ENCODE measurements at regions of chr14 and their contacts with region 1.

Region 1: GRCh38 chr14:99946652-99947489 is 118.4 kb upstream of the EVL start:
- DNase-seq: no peak
- H3K4me3 ChIP-seq: no peak overlapping the region; the same call in 1 of the 2 replicates
- CTCF ChIP-seq: peak; percentile 89

Region 2: DNA sequence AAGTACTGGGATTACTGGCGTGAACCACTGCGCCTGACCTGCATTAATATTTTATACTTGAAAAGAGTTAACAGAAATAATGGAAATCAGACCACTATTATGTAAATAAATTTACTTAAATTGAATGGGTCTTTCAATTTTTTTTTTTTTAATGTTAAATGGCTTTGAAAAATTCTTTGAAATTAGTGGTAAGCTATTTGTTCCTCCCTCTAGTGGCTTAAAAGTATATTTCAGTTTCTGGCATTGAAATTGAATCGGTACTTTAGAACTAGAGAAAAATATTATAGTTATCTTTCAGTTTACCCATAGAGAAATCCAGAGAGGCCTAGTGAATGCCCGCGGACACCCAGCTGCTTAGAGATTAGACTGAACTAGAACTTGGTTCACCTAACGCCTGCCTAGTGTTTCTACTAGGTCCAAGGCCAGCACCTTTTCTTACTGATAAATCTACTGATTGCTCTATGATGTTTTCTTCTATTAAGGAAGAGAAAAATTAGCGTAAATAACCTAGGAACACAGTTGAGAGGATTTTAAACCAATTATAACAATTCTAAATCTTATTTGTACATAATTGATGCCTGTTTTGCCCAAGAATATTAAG is 47.2 kb before region 1 on chr14:
- CTCF ChIA-PET with region 1: interaction called, 12 read pairs
- POLR2A ChIA-PET with region 1: no interaction called
- DNase-seq: no peak
- H3K4me3 ChIP-seq: no peak overlapping the region
- CTCF ChIP-seq: peak; percentile 32

Region 3: DNA sequence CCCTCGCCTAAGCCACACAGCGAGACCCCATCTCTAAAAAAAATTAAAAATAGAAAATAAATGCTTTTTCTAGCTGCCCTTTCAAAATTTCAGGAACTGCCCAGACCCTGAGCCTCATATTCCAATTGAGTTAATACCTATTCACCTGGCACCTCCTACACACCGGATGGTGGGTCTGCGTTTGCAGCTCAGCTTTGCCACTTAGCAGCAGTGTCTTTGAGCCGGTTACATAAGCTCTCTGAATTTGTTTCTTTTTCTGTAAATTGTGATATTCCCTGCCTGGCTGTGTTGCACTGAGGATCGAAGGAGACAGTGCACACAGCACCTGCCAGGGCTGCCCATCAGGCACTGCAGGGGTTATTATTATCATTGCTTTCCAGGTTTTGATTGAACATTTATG is 28.1 kb before region 1 on chr14:
- CTCF ChIA-PET with region 1: interaction called, 25 read pairs
- POLR2A ChIA-PET with region 1: no interaction called
- DNase-seq: no peak
- H3K4me3 ChIP-seq: no peak overlapping the region
- CTCF ChIP-seq: no peak

Region 4: DNA sequence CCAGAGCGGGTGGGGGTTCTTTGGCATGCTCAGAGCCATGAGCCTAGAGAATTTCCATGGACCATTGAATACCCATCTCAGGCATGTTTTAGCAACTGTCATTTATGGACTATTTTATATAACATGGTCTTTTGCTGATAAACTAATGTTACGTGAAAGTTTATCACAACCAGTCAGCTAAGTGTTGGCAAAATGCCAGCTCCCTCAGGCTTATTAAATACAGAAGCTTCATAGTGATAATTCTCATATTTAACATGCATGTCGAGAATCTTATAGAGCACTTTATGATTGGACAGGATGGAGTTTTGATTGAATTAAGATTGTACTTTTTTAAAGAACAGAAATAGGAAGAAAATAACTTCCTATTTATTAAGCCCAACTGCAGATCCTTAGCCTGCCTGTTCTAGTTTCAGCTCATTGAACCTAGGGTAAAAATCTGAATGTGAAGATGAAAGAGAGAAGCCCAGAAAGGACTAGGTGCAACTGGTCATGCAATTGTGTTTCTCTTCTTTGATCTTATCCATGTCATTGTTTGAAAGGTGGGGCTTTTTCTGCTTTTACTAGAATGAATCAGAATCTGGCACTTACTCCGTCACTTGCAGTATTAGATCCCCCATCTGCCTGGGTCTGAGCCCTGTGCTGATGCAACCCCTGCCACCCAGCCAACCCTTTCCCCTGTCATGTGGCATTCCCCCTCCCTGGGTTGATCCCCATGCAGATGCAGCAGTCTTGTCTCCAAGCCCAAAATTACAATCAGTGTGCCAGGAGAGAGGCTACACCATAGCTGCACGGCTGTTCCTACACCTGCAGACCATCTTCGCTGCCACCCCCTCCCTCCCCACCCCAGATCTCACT is 16.2 kb before region 1 on chr14:
- CTCF ChIA-PET with region 1: interaction called, 34 read pairs
- POLR2A ChIA-PET with region 1: no interaction called
- DNase-seq: no peak
- H3K4me3 ChIP-seq: no peak overlapping the region
- CTCF ChIP-seq: no peak

Region 5: DNA sequence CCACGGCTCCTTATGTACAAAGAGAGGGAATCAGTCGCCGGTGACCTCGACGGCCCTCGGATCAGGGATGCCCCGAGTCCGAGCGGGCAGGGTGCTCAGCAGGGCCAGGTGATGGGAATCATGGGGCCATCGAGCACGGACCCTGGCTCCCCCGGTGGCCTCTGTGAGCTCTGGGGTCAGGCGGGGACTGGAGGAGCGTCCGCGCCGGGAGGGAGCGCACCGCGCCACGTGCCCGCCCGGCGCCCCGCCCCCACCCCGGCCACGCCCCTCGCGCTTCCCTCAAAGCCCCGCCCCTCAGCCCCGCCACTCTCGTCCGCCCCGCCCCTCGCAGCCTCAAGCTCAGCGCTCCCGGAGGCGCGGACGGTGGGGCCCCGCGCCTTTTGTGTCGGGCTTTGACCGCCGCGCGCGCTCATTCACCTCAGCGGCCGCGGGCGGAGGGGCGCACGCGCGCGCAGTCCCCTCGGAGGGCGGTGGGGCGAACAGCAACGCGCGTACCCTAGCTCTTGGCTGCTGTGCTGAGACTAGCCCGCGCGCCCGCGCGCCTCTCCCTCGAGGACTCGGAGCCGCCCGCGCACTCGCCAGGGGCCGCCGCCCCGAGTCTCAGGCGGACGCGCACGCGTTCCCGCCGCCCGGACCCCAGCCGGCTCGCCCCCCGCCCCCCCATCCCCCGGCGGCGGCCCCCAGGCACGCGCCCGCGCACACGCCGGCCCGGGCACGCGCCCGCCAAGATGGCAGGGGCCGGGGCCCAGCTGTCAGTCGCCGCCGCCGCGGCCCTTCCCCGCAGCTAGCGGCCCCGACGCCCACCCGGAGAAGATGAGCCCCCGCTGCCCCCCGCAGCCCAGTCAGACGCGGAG is 24.4 kb after region 1 on chr14:
- CTCF ChIA-PET with region 1: interaction called, 17 read pairs
- POLR2A ChIA-PET with region 1: interaction called, 4 read pairs
- DNase-seq: no peak
- H3K4me3 ChIP-seq: peak overlapping the region; percentile 79
- CTCF ChIP-seq: no peak

Measured in AG04449 (cell line).